ENCODE measurements at regions of chr2 and their contacts with region 1.

Region 1: DNA sequence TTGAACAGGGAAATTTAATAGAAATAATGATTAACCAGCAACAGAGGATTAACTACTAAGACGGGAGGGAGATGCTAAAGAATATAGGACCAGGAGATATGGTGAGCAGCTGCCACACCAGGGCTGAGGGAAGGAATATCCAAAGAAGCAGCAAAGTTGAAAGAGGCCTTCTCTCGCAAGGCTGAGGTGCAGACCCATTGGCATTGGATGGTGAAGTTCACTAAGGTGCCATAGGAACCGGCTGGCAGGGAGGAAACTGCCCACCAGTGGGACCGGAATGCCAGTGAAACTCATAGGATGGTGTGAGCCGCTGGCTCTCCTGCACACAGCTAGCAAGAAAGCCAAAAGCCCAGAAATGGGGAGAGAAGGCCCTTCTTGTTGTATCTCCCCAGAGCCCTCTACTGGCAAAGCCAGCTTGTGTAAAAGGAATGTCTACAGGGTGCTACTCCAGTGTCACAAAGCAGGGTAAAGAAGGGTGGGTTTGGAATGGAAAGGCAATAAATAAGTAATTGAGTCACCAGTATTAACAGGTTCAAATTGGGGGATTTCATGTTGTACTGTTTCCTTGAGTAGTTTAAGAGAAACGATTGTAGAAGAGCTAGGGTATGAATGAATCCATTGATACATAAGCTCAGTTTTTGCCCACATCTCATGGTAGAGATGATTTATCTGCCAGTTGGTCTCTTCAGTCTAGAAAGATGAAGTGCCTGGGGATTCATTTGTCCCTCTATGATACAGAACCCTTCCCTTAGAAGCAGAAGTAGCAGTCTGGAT is 36.0 kb downstream of the FARP2 start:
- DNase-seq: peak; percentile 52 to 59
- H3K4me3 ChIP-seq: no peak overlapping the region
- H3K4me3 Mint-ChIP-seq: no peak overlapping the region
- H3K27ac Mint-ChIP-seq: peak overlapping the region; percentile 37
- H3K4me1 ChIP-seq: no peaks in the 10 kb centered on the region
- H3K4me1 Mint-ChIP-seq: peaks cover 11% of the 10 kb centered on the region
- H3K27me3 ChIP-seq: no peaks in the 10 kb centered on the region
- H3K27me3 Mint-ChIP-seq: no peaks in the 10 kb centered on the region
- CTCF ChIP-seq: peak; percentile 45 to 80

Region 2: GRCh38 chr2:241350878-241351639 is 41.0 kb before region 1 on chr2:
- CTCF ChIA-PET with region 1: interaction called, 14 read pairs
- POLR2A ChIA-PET with region 1: no interaction called
- intact Hi-C with region 1: loop called (anchors 1 kb)
- DNase-seq: peak; percentile 46
- H3K4me3 ChIP-seq: no peak overlapping the region
- H3K4me3 Mint-ChIP-seq: peak overlapping the region; percentile 63
- H3K27ac Mint-ChIP-seq: peak overlapping the region; percentile 79
- H3K4me1 ChIP-seq: peaks cover 36% of the 10 kb centered on the region
- H3K4me1 Mint-ChIP-seq: peaks cover 12% of the 10 kb centered on the region
- H3K27me3 ChIP-seq: no peaks in the 10 kb centered on the region
- H3K27me3 Mint-ChIP-seq: no peaks in the 10 kb centered on the region
- CTCF ChIP-seq: no peak

Region 3: DNA sequence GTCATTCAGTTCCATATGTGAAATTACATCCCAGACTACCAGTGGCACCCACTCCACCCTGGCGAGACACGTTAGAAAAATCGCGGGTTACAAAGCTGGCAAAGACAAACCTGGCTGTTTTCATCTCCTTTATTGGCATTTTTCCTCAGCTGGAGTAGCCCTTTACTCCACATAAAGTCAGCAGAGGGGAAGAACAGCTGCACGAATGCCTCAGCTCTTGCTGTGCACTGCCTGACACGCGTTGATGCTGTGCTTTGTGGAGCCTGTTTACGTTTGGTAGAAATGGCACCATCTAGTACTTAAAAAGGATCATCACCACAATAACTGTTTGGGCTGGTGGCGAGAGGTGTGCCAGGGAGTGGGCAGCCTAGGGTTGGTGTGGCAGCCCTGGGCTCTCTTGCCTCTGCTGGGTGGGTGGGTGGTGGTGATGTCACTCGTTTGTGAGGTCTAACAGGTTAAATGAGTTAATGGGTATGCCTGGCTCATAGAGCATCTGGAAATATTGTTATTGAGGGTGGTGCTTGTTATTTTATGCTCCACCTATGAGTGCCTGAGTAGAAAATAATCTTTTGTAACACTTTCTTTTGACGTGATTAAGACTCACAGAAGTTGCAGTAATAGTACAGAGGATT is 19.6 kb before region 1 on chr2:
- CTCF ChIA-PET with region 1: interaction called, 5 read pairs
- POLR2A ChIA-PET with region 1: no interaction called
- intact Hi-C with region 1: loop called (anchors 2 kb)
- DNase-seq: no peak
- H3K4me3 ChIP-seq: no peak overlapping the region
- H3K4me3 Mint-ChIP-seq: no peak overlapping the region
- H3K27ac Mint-ChIP-seq: peak overlapping the region; percentile 26
- H3K4me1 ChIP-seq: peaks cover 37% of the 10 kb centered on the region
- H3K4me1 Mint-ChIP-seq: peaks cover 19% of the 10 kb centered on the region
- H3K27me3 ChIP-seq: no peaks in the 10 kb centered on the region
- H3K27me3 Mint-ChIP-seq: no peaks in the 10 kb centered on the region
- CTCF ChIP-seq: no peak

Region 4: DNA sequence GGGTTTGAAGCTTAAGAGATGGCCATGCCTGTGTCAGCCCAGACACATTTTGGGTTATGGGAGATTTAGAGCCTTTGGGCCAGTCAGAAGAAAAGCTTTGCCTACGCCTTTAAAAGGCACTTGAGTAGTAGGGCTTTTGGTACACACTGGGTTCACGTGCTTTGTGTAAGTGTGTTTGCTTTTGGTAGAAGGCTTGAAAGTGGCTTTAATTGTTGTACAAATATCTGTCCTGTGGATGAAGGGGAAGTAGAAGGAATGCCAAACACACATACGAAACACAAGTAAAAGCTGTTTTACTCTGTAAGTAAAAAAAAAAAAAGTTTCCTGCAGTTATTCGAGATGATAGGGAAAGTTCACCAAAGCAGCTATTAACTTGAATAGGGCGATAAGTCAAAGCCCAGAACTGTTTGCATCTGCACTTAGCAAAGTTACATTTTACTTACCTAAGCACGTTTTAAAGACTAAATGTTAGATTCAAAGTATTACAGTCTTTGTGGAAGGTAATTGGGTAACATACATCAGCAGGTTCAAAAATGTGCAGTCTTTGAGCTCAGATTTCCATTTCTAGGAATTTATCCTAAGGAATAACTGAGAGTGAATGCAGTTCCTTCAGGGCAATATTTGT is 40.9 kb after region 1 on chr2:
- CTCF ChIA-PET with region 1: no interaction called
- POLR2A ChIA-PET with region 1: no interaction called
- intact Hi-C with region 1: no loop called
- DNase-seq: peak in 1 of 2 experiments; percentile 4
- H3K4me3 ChIP-seq: no peak overlapping the region
- H3K4me3 Mint-ChIP-seq: no peak overlapping the region
- H3K27ac Mint-ChIP-seq: no peak overlapping the region
- H3K4me1 ChIP-seq: no peaks in the 10 kb centered on the region
- H3K4me1 Mint-ChIP-seq: peaks cover 7% of the 10 kb centered on the region
- H3K27me3 ChIP-seq: no peaks in the 10 kb centered on the region
- H3K27me3 Mint-ChIP-seq: no peaks in the 10 kb centered on the region
- CTCF ChIP-seq: no peak

Measured in Caco-2 (cell line).